Esophagus muscularis mucosa (tissue), 4 donors: ENCODE measurements at regions of chr19 and their contacts with region 1.

Region 1: DNA sequence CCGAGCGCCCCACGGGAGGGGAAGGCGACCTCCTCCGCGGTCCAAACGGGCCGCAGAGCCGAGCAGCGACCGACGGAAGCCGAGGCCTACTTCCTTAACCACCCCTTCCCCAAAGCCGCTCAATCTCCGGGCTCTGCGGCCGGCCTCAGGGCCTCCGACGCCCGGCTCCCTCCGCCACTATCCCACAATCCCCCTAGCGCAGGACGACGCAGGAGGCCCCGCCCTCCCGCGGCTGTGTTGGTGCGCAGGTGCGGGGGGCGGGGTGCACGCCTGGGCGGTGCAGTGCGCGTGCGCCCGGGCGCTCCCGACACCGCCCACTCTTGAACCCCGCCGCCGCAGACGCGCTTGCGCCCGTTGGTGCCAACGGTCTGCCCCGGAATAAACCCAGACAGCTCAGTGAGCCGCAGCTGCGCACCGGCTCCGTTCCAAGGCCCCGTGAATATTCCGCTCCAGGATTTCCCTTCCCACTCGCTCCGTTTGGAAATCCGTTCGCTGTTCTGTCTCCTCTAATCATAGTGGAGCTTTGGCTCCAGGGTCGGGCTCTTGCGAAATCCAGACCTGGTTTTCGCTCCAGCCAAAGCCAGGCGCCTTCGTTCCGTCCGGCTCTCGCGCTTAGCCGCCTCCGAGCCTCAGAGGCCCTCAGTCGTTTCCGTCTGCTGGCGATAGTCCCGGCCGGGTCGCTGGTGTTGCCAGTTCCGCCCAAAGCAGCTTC is at the start of gene PPP6R1:
- DNase-seq: peak; percentile 99
- H3K4me3 ChIP-seq: peak within 1 kb of the TSS; percentile 94 to 99 (median 98)
- H3K27ac ChIP-seq: peak within 1 kb of the TSS; percentile 89 to 97 (median 92)
- H3K4me1 ChIP-seq: peaks cover 44 to 52% (median 51%) of the 10 kb centered on the region in 4 donors
- H3K27me3 ChIP-seq: no peaks in the 10 kb centered on the region
- CTCF ChIP-seq: peak in 1 of 3 experiments; percentile 35
- EP300 ChIP-seq: no peak
- POLR2A ChIP-seq: peak; percentile 83
- total RNA-seq, gene PPP6R1: 37.4 to 75.5 (median 45.6) TPM

Region 2: GRCh38 chr19:55216461-55217198 is 42.4 kb before region 1 on chr19:
- intact Hi-C with region 1: loop called (anchors 5 kb)
- DNase-seq: no peak
- H3K4me3 ChIP-seq: peak overlapping the region; percentile 34 to 51 (median 46)
- H3K27ac ChIP-seq: peak overlapping the region in 3 of 4 donors; percentile 31 to 50 (median 46)
- H3K4me1 ChIP-seq: peaks cover 5 to 15% (median 14%) of the 10 kb centered on the region in 4 donors
- H3K27me3 ChIP-seq: peaks cover 0 to 56% (median 2%) of the 10 kb centered on the region in 4 donors
- CTCF ChIP-seq: no peak
- EP300 ChIP-seq: no peak
- POLR2A ChIP-seq: peak; percentile 32

Region 3: GRCh38 chr19:55227241-55228014 is 31.6 kb before region 1 on chr19:
- intact Hi-C with region 1: no loop called
- DNase-seq: no peak
- H3K4me3 ChIP-seq: no peak overlapping the region
- H3K27ac ChIP-seq: no peak overlapping the region
- H3K4me1 ChIP-seq: peaks cover 0 to 8% (median 0%) of the 10 kb centered on the region in 4 donors
- H3K27me3 ChIP-seq: no peaks in the 10 kb centered on the region
- CTCF ChIP-seq: no peak
- EP300 ChIP-seq: no peak
- POLR2A ChIP-seq: no peak

Region 4: DNA sequence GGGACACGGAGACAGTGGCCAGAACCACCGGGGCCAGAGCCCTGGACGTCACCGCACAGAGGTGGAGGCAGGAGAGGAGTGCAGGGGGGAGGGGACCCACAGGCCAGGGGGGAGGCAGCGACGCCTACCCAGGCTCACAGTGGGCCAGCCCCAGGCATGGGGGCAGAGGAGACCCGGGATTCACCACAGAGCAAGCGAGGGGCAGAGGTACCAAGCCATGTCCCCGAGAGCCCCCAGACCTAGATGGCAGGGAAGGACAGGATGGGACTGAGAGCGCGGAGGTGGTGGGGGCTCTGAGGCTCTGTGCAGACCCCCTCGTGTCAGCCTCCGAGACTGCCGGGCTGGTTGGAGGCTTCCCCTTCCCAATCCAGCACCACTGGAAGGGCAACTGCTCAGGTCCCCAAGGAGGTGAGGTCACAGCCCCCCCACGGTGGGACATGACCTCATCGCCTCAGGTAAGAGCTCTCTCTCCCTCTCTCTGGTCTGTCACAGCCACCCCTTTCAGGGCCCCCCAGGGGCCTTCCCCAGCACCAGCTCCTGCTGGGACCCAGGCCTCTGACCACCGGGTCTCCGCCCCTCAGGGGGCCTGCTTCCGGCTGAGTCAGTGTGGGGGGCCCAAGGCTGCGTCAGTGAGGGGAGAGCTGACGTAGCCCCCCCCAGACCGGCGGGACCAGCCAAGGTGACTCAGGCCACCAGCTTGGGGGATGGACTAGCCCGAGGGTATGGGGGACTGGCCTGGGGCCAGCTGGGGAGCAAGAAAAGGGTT is 113.5 kb after region 1 on chr19:
- intact Hi-C with region 1: no loop called
- DNase-seq: no peak
- H3K4me3 ChIP-seq: no peak overlapping the region
- H3K27ac ChIP-seq: no peak overlapping the region
- H3K4me1 ChIP-seq: peaks cover 17 to 34% (median 31%) of the 10 kb centered on the region in 4 donors
- H3K27me3 ChIP-seq: peaks cover 5 to 99% (median 73%) of the 10 kb centered on the region in 4 donors
- CTCF ChIP-seq: no peak
- EP300 ChIP-seq: no peak
- POLR2A ChIP-seq: no peak

Region 5: GRCh38 chr19:55383789-55384577 is 125.0 kb after region 1 on chr19 and contains the start of gene TMEM238:
- intact Hi-C with region 1: no loop called
- DNase-seq: no peak
- H3K4me3 ChIP-seq: peak within 1 kb of the TSS; percentile 71 to 87 (median 77)
- H3K27ac ChIP-seq: peak within 1 kb of the TSS; percentile 88 to 94 (median 90)
- H3K4me1 ChIP-seq: peaks cover 42 to 50% (median 46%) of the 10 kb centered on the region in 4 donors
- H3K27me3 ChIP-seq: no peaks in the 10 kb centered on the region
- CTCF ChIP-seq: peak; percentile 13 to 50 (median 38)
- EP300 ChIP-seq: no peak
- POLR2A ChIP-seq: no peak
- total RNA-seq, gene TMEM238: 0.83 to 7.5 (median 1.00) TPM